CD4-positive, alpha-beta T cell (primary cell): ENCODE measurements at regions of chr13 and their contacts with region 1.

Region 1: GRCh38 chr13:112606109-112607001 is 18.4 kb upstream of the TUBGCP3 start:
- DNase-seq: peak; percentile 64 to 92 (median 82)
- ATAC-seq: peak; percentile 97
- H3K4me3 ChIP-seq: peak overlapping the region; percentile 53
- H3K4me3 Mint-ChIP-seq: peak overlapping the region; percentile 90
- H3K27ac ChIP-seq: no peak overlapping the region
- H3K27ac Mint-ChIP-seq: no peak overlapping the region
- H3K4me1 ChIP-seq: peaks cover 12% of the 10 kb centered on the region
- H3K4me1 Mint-ChIP-seq: peaks cover 9% of the 10 kb centered on the region
- H3K27me3 ChIP-seq: no peaks in the 10 kb centered on the region
- H3K27me3 Mint-ChIP-seq: peaks cover 51% of the 10 kb centered on the region
- CTCF ChIP-seq: peak; percentile 97

Region 2: DNA sequence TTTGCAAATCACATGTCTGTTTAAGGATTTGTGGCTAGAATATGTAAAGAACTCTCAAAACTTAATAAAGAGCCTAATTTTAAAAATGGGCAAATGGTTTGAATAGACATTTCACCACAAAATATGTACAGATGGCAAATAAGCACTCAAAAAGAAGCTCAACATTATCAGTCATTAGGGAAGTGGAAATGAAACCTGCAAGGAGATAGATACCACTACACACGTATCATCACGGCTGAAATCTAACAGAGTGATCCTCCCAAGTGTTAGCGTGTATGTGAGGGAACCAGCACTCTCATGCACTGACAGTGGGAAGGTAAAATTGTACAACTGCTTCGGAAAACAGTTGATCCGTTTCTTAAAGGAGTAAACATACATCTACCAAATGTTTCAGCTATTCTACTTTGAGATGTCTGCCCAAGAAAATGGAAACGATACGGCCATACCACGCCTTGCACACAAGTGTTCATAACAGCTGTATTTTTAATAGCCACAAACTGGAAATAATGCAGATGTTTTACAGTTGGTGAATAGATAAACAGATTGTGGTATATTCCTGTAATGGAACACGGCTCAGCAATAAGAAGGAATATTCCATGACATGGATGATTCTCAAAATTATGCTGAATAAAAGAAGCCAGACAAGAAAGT is 1476.8 kb before region 1 on chr13:
- CTCF ChIA-PET with region 1: no interaction called
- POLR2A ChIA-PET with region 1: no interaction called
- intact Hi-C with region 1: no loop called
- DNase-seq: no peak
- ATAC-seq: no peak
- H3K4me3 ChIP-seq: no peak overlapping the region
- H3K4me3 Mint-ChIP-seq: no peak overlapping the region
- H3K27ac ChIP-seq: no peak overlapping the region
- H3K27ac Mint-ChIP-seq: no peak overlapping the region
- H3K4me1 ChIP-seq: no peaks in the 10 kb centered on the region
- H3K4me1 Mint-ChIP-seq: no peaks in the 10 kb centered on the region
- H3K27me3 ChIP-seq: no peaks in the 10 kb centered on the region
- H3K27me3 Mint-ChIP-seq: peaks cover 8% of the 10 kb centered on the region
- CTCF ChIP-seq: no peak

Region 3: DNA sequence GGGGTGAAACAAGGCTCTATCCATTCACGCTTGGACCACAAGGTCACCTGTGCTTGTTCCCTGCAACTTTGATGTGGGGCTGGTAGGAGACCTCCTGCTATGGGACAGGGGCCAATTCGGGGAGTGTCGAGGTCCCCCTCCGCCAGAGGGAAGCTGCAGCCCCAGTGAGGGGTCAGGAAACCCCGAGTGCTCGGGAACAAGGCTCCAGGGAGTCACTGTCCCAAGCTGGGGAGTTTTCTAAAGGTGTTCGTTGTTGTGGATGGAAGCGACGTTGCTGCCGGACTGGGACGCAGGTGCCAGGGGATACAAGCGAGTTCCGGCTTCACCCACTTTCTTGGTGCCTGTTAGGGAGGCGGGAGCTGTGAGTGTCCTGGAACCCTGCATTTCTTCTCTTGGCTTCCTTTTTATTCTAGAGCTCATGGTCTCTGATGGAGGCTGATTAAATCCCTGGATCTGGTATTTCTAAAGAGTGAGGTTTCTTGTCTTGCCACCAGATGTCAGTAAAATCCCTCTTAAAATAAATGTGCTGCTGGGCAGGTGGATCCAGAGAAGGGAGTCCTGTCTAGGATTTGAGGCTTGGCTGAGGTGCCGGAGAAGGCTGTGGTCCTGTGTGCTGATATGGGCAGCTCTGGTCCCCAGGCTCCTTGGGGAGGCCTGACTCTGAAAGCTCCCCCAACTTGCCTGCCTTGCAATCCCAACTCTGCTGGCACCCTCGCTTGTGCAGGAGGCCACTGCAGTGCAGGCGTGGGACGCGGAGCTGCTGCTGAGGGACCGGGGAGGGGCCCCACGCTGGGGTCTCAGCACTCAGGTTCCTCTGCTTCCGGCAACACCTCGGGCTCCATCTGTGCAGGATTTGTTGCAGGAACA is 1132.0 kb before region 1 on chr13:
- CTCF ChIA-PET with region 1: no interaction called
- POLR2A ChIA-PET with region 1: no interaction called
- intact Hi-C with region 1: loop called in 1 of 2 experiments (anchors 2 kb)
- DNase-seq: peak in 3 of 14 experiments; percentile 11 to 23 (median 18)
- ATAC-seq: no peak
- H3K4me3 ChIP-seq: no peak overlapping the region
- H3K4me3 Mint-ChIP-seq: no peak overlapping the region
- H3K27ac ChIP-seq: no peak overlapping the region
- H3K27ac Mint-ChIP-seq: no peak overlapping the region
- H3K4me1 ChIP-seq: no peaks in the 10 kb centered on the region
- H3K4me1 Mint-ChIP-seq: no peaks in the 10 kb centered on the region
- H3K27me3 ChIP-seq: no peaks in the 10 kb centered on the region
- H3K27me3 Mint-ChIP-seq: no peaks in the 10 kb centered on the region
- CTCF ChIP-seq: no peak

Region 4: DNA sequence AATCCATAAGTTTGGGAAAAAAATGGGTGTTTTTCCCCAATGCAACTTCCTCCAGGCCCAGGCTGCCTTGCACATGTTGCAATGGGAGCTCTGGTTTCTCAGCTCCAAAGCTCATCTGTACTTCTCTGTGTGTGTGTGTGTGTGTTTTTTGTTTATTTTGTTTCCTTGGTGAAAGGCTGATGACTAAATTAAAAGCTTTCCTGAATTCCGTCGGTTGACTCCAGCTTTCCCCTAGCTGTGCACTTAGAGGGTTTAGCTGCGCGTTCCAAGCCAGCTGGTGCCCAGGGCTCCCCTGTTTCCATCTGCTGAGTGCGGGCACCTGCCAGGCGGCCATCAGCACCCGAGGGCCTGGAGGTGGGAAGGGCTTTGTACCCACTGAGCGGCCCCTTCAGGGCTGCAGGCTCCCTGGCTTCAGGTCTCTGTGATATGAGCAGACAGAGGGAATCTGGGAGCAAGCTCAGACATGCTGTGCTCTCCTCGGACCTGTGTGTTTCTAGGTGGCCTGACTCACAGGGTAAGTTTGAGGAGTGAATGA is 668.5 kb before region 1 on chr13:
- CTCF ChIA-PET with region 1: no interaction called
- POLR2A ChIA-PET with region 1: no interaction called
- intact Hi-C with region 1: no loop called
- DNase-seq: no peak
- ATAC-seq: no peak
- H3K4me3 ChIP-seq: no peak overlapping the region
- H3K4me3 Mint-ChIP-seq: no peak overlapping the region
- H3K27ac ChIP-seq: no peak overlapping the region
- H3K27ac Mint-ChIP-seq: no peak overlapping the region
- H3K4me1 ChIP-seq: no peaks in the 10 kb centered on the region
- H3K4me1 Mint-ChIP-seq: no peaks in the 10 kb centered on the region
- H3K27me3 ChIP-seq: peaks cover 0 to 4% of the 10 kb centered on the region in 2 experiments
- H3K27me3 Mint-ChIP-seq: peaks cover 32% of the 10 kb centered on the region
- CTCF ChIP-seq: no peak

Region 5: GRCh38 chr13:112325920-112326645 is 280.3 kb before region 1 on chr13:
- CTCF ChIA-PET with region 1: no interaction called
- POLR2A ChIA-PET with region 1: no interaction called
- intact Hi-C with region 1: no loop called
- DNase-seq: no peak
- ATAC-seq: no peak
- H3K4me3 ChIP-seq: no peak overlapping the region
- H3K4me3 Mint-ChIP-seq: no peak overlapping the region
- H3K27ac ChIP-seq: no peak overlapping the region
- H3K27ac Mint-ChIP-seq: no peak overlapping the region
- H3K4me1 ChIP-seq: no peaks in the 10 kb centered on the region
- H3K4me1 Mint-ChIP-seq: no peaks in the 10 kb centered on the region
- H3K27me3 ChIP-seq: peaks cover 0 to 3% of the 10 kb centered on the region in 2 experiments
- H3K27me3 Mint-ChIP-seq: peaks cover 45% of the 10 kb centered on the region
- CTCF ChIP-seq: no peak

Region 6: DNA sequence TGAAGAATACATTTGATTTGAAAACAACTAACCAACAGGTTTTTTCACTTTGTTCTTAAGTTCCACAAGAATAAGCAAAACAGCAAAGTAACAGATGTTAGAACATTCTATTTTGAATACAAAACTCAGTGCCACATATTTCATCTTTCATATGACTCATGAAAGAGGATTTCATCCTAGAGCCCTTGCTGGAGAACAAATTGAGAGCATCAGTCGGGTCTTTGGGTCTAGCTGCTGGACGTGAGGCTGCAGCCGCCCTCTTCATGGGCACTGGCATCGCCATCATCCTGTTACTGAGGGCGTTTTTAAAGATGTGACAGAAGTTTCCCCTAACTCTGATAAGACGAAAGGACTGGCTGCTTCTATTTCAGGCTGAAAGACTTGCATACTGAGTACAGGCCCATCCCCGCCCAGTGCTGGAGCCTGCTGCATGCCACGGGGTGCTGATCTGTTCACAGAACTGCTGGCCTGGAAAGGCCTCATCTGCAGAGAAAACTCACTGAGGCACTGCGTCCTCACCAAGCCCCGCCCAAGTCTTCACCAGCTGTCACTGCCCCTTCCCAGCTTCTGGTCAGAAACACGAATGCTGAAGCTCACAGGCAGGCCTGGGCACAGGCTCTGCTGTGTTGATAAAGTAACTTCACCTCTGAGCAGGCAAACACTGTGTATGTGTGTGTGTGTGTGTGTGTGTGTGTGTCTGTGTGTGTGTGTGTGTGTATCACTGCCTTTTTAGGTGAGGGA is 119.8 kb before region 1 on chr13:
- CTCF ChIA-PET with region 1: no interaction called
- POLR2A ChIA-PET with region 1: no interaction called
- intact Hi-C with region 1: no loop called
- DNase-seq: no peak
- ATAC-seq: no peak
- H3K4me3 ChIP-seq: no peak overlapping the region
- H3K4me3 Mint-ChIP-seq: no peak overlapping the region
- H3K27ac ChIP-seq: no peak overlapping the region
- H3K27ac Mint-ChIP-seq: no peak overlapping the region
- H3K4me1 ChIP-seq: no peaks in the 10 kb centered on the region
- H3K4me1 Mint-ChIP-seq: no peaks in the 10 kb centered on the region
- H3K27me3 ChIP-seq: no peaks in the 10 kb centered on the region
- H3K27me3 Mint-ChIP-seq: no peaks in the 10 kb centered on the region
- CTCF ChIP-seq: no peak

Region 7: DNA sequence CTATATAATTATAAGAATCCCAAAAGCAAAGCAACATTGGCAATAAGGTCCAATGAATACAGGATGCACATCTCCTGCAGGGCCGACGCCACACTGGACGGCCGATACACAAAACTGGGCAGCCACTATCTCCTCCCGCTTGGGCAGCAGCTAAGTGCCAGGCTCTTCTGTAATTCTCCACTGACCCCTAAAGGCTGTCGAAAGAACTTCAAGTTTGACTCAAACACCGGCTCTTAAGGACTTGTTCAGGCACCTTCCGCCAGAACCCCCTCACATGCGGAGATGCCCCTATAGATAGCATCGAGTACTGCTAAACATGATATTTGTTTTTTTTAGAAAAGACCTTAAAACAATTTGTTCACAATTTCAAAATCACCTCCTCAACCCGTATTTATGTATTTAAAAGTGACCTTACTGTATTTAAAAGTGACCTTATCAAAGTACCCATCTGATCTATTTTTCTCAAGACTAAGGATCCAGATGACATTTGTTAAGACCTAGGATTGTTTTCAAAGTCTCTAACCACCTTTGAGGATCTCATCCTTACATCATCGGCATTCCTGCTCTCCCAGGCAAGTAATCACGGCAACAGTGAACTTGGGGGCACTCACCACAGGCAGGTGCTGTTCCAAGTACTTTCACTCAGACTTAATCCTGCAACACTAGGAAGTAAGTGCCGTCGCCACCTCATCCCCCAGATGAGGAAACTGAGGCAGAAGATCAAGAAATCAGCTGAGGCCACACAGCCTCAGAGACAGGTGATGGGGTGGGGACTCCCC is 96.2 kb before region 1 on chr13:
- CTCF ChIA-PET with region 1: no interaction called
- POLR2A ChIA-PET with region 1: no interaction called
- intact Hi-C with region 1: loop called in 1 of 2 experiments (anchors 5 kb)
- DNase-seq: peak in 2 of 14 experiments; percentile 5 to 6
- ATAC-seq: no peak
- H3K4me3 ChIP-seq: no peak overlapping the region
- H3K4me3 Mint-ChIP-seq: no peak overlapping the region
- H3K27ac ChIP-seq: no peak overlapping the region
- H3K27ac Mint-ChIP-seq: no peak overlapping the region
- H3K4me1 ChIP-seq: no peaks in the 10 kb centered on the region
- H3K4me1 Mint-ChIP-seq: no peaks in the 10 kb centered on the region
- H3K27me3 ChIP-seq: no peaks in the 10 kb centered on the region
- H3K27me3 Mint-ChIP-seq: no peaks in the 10 kb centered on the region
- CTCF ChIP-seq: no peak